IMR-90 (cell line): ENCODE measurements at regions of chr4 and their contacts with region 1.

Region 1: DNA sequence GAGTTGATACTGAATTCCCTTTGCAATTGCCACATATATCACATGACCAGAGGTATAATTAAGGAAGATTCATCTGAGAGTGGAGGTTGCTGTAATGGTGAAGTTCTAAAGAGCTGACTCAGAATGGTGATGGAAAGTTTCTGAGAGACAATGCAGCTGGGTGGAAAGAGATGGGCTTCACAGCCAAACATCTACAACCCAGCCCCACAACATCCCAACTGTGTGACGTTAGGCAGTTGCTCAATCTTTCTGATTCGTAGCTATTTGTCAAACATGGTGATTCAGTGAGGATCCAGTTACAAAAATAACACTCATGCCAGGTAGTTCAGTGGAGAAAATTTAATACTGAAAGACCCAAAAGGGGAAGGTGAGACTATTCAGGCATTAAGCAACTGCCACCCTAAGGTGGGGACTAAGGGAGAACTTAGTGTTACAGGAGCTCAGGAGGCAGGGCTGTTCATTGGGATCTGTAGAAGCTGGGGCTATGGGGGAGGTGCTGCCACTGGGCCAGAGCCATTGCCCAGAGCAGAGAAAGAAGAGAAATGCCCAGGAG is 6.9 kb upstream of the AFF1 start:
- DNase-seq: peak; percentile 99
- ATAC-seq: peak; percentile 80
- H3K4me3 ChIP-seq: no peak overlapping the region
- H3K27ac ChIP-seq: peak overlapping the region; percentile 73
- H3K4me1 ChIP-seq: peaks cover 9% of the 10 kb centered on the region
- H3K27me3 ChIP-seq: no peaks in the 10 kb centered on the region
- CTCF ChIP-seq: no peak
- POLR2A ChIP-seq: no peak
- RAD21 ChIP-seq: no peak

Region 2: GRCh38 chr4:87093443-87094123 is 165.7 kb after region 1 on chr4:
- CTCF ChIA-PET with region 1: interaction called, 24 read pairs
- POLR2A ChIA-PET with region 1: no interaction called
- dilution Hi-C with region 1: no loop called
- in situ Hi-C with region 1: loop called (anchors 5 kb)
- intact Hi-C with region 1: no loop called
- DNase-seq: peak; percentile 72
- ATAC-seq: peak; percentile 83
- H3K4me3 ChIP-seq: no peak overlapping the region
- H3K27ac ChIP-seq: no peak overlapping the region
- H3K4me1 ChIP-seq: peaks cover 2% of the 10 kb centered on the region; the same call in 1 of the 2 replicates
- H3K27me3 ChIP-seq: no peaks in the 10 kb centered on the region
- CTCF ChIP-seq: peak; percentile 56
- POLR2A ChIP-seq: no peak
- RAD21 ChIP-seq: peak; percentile 61

Region 3: GRCh38 chr4:87118826-87119225 is 190.9 kb after region 1 on chr4:
- CTCF ChIA-PET with region 1: interaction called, 5 read pairs
- POLR2A ChIA-PET with region 1: no interaction called
- dilution Hi-C with region 1: no loop called
- in situ Hi-C with region 1: no loop called
- intact Hi-C with region 1: loop called (anchors 10 kb)
- DNase-seq: peak; percentile 93
- ATAC-seq: peak; percentile 87
- H3K4me3 ChIP-seq: no peak overlapping the region; the same call in 1 of the 2 replicates
- H3K27ac ChIP-seq: peak overlapping the region; percentile 72
- H3K4me1 ChIP-seq: peaks cover 28% of the 10 kb centered on the region
- H3K27me3 ChIP-seq: no peaks in the 10 kb centered on the region
- CTCF ChIP-seq: no peak
- POLR2A ChIP-seq: no peak
- RAD21 ChIP-seq: no peak

Region 4: GRCh38 chr4:87196927-87197326 is 269.0 kb after region 1 on chr4:
- CTCF ChIA-PET with region 1: no interaction called
- POLR2A ChIA-PET with region 1: no interaction called
- dilution Hi-C with region 1: no loop called
- in situ Hi-C with region 1: no loop called
- intact Hi-C with region 1: no loop called
- DNase-seq: no peak
- ATAC-seq: no peak
- H3K4me3 ChIP-seq: no peak overlapping the region
- H3K27ac ChIP-seq: no peak overlapping the region
- H3K4me1 ChIP-seq: no peaks in the 10 kb centered on the region
- H3K27me3 ChIP-seq: no peaks in the 10 kb centered on the region
- CTCF ChIP-seq: no peak
- POLR2A ChIP-seq: no peak
- RAD21 ChIP-seq: no peak

Region 5: GRCh38 chr4:87220094-87220822 is 292.3 kb after region 1 on chr4 and contains the start of gene KLHL8:
- CTCF ChIA-PET with region 1: no interaction called
- POLR2A ChIA-PET with region 1: no interaction called
- dilution Hi-C with region 1: no loop called
- in situ Hi-C with region 1: no loop called
- intact Hi-C with region 1: loop called (anchors 5 kb)
- DNase-seq: peak; percentile 73
- ATAC-seq: peak; percentile 97
- H3K4me3 ChIP-seq: peak within 1 kb of the TSS; percentile 69
- H3K27ac ChIP-seq: peak within 1 kb of the TSS; percentile 90
- H3K4me1 ChIP-seq: no peaks in the 10 kb centered on the region
- H3K27me3 ChIP-seq: no peaks in the 10 kb centered on the region
- CTCF ChIP-seq: 0 out of 2 replicates have a peak, but pooled peaks have one; percentile 14
- POLR2A ChIP-seq: peak; percentile 72
- RAD21 ChIP-seq: no peak
- total RNA-seq, gene KLHL8: 9.5 and 18.6 TPM in 2 replicates